ENCODE measurements at regions of chr16 and their contacts with region 1.

Region 1: GRCh38 chr16:57475711-57476339 is 10.5 kb downstream of the DOK4 start:
- DNase-seq: no peak
- H3K4me3 ChIP-seq: no peak overlapping the region
- H3K27ac ChIP-seq: no peak overlapping the region
- H3K4me1 ChIP-seq: no peaks in the 10 kb centered on the region
- H3K27me3 ChIP-seq: no peaks in the 10 kb centered on the region
- CTCF ChIP-seq: peak in 2 of 4 experiments; percentile 22 to 35
- POLR2A ChIP-seq: no peak

Region 2: GRCh38 chr16:56716761-56717160 is 759.1 kb before region 1 on chr16:
- intact Hi-C with region 1: no loop called
- DNase-seq: no peak
- H3K4me3 ChIP-seq: no peak overlapping the region
- H3K27ac ChIP-seq: no peak overlapping the region
- H3K4me1 ChIP-seq: no peaks in the 10 kb centered on the region
- H3K27me3 ChIP-seq: no peaks in the 10 kb centered on the region
- CTCF ChIP-seq: no peak
- POLR2A ChIP-seq: no peak

Region 3: DNA sequence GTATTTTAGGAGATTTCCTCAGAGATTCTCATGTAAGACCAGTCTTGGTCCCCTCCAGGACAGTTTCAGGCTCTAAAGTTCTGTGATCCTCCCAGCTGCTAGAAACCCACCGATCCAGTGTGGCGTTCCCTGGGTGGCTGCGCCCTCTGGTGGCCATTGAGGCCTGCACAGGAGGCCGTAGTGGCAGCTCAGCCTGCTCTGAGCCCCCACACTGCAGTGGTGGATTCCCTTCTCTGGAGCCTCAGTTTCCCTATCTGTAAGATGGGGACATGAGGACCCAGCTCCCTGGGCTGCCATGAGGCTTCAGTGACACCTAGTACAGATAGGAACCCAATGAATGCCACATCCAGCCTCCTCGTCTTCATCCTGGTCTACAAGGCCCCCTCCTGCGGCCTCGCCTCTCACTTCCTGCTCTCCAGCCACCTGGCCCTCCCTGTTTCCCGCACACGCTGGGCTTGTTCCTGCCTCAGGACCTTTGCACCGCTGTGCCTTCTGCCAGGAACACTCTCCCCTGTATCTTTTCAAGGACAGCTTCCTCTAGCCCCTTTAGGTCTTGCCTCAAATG is 44.1 kb after region 1 on chr16:
- intact Hi-C with region 1: loop called (anchors 5 kb)
- DNase-seq: peak; percentile 63
- H3K4me3 ChIP-seq: no peak overlapping the region
- H3K27ac ChIP-seq: no peak overlapping the region
- H3K4me1 ChIP-seq: no peaks in the 10 kb centered on the region
- H3K27me3 ChIP-seq: no peaks in the 10 kb centered on the region
- CTCF ChIP-seq: peak; percentile 82 to 93 (median 92)
- POLR2A ChIP-seq: no peak

Region 4: DNA sequence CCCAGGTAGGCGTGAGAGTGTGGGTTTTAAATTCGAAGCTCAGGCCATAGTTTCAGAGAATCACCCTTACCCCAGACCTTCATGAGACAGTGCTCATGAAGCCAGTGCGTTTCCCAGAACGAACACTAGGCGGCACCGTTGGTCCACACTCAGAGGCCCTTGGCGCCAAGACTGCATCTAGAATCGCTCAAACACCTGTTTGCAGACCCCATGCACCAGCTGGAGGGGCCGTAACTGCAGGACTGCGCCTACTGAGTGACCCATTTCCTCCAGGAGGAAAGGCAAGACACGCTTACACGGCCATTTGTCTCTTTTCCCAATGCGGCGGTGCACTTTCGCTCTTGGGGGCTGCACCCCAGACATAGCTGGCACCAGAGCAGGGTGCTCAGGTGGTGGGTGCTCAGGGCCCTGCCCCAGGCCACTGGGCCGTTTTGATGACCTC is 100.6 kb after region 1 on chr16:
- intact Hi-C with region 1: no loop called
- DNase-seq: peak; percentile 67
- H3K4me3 ChIP-seq: no peak overlapping the region
- H3K27ac ChIP-seq: no peak overlapping the region
- H3K4me1 ChIP-seq: no peaks in the 10 kb centered on the region
- H3K27me3 ChIP-seq: no peaks in the 10 kb centered on the region
- CTCF ChIP-seq: peak; percentile 56 to 88 (median 74)
- POLR2A ChIP-seq: no peak

Region 5: DNA sequence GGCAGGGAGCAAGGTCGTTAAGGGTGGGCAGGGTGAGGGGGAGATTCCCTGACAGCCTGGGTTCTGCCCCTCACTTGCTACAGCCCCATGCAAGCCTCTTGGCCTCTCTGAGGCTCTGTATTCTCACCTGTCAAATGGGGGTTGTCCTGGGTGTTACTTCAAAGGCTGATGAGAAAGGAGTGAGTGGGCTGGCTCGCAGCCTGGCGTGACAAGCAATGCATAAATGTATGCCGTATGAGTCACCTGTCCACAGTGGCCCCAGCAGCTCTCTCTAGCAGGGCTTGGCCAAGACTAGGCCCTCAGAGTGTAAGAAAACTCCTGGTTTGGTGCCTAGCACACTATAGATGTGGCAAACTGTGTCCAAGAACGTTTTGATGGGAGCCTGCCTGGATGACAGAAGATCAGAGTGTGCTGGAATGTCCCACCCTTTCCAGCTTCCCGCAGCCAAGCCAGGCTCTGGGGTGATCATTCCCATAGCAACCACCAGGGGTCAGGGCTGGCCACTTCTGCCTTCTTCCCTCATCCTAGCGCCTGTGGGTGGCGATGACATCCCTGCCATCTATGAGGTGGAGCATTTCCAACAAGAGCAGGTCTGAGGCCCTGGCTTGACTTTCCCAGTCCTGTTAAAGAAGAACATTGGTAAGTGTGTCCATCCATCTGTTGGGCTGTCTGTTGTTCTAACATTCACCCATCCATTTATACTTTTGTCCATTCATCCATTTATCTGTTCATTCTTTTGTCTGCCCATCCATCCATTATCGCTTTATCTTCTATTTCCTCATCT is 115.5 kb after region 1 on chr16:
- intact Hi-C with region 1: no loop called
- DNase-seq: peak; percentile 59
- H3K4me3 ChIP-seq: no peak overlapping the region
- H3K27ac ChIP-seq: no peak overlapping the region
- H3K4me1 ChIP-seq: no peaks in the 10 kb centered on the region
- H3K27me3 ChIP-seq: no peaks in the 10 kb centered on the region
- CTCF ChIP-seq: peak; percentile 47 to 93 (median 84)
- POLR2A ChIP-seq: no peak

Measured in prostate gland (tissue), 2 donors.